GM12878 (cell line): ENCODE measurements at regions of chr7 and their contacts with region 1.

Region 1: DNA sequence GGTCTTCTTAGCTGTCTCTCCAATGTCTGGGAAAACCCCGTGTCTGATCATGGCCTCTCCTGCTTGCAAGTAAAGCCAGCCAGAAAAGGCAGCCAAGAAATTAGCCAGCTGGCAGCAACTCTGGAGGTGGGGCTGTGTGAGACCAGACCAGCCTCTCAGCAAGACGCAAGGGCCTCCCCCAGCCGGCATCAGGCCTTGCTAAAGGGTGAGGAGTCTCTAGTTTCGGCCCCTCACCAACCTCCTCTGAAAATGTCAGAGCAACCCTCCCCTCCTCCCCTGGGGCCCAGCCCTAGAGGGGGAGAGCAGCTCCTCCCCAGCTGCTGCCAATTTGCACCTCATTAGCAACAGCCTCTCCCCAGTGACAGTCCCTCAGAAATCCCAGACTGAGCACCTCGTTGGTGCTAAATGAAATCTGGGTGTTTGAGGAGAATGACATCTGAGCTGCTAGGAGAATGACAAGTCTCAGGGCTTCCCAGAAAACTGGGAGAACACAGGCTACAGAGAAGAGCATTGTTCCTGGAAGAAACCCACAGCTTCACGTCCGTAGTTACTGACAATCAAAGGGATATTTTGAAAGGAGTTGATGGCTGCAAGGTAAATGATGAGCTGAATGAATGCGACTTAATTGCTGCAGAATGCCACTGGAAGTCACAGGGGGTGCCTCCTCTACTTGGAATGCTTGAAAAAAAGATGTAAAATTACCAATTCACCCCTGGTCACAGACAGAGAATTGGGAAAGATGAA is 25.9 kb downstream of the DGKI start:
- DNase-seq: no peak
- ATAC-seq: peak; percentile 91
- H3K4me3 ChIP-seq: no peak overlapping the region
- H3K27ac ChIP-seq: no peak overlapping the region
- H3K4me1 ChIP-seq: peaks cover 6% of the 10 kb centered on the region
- H3K27me3 ChIP-seq: no peaks in the 10 kb centered on the region
- CTCF ChIP-seq: no peak
- EP300 ChIP-seq: no peak; a peak in 1 of 4 replicates
- POLR2A ChIP-seq: no peak
- RAD21 ChIP-seq: no peak

Region 2: DNA sequence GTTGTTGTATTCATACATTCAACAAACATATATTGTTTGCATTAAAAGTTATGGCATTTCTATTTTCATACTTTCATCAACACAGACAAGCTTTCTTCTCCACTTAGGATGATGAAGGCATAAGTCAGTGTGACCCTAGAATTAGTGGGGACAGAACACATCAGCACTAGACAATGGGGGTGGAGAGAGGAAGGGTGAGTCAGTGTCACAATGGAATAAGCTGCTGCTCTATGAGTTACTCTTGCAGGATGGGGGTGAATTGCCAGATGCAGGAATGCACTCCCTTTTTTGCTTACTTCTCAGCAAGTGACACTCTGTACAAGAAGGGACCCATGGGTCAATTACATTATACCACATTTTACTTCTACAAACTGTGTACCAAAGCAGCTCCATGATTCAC is 48.1 kb before region 1 on chr7:
- CTCF ChIA-PET with region 1: interaction called, 5 read pairs
- POLR2A ChIA-PET with region 1: interaction called, 7 read pairs
- RAD21 ChIA-PET with region 1: interaction called, 16 read pairs
- SMC1A ChIA-PET with region 1: interaction called, 9 read pairs
- in situ Hi-C with region 1: no loop called
- intact Hi-C with region 1: no loop called
- DNase-seq: no peak
- ATAC-seq: peak; percentile 64
- H3K4me3 ChIP-seq: no peak overlapping the region
- H3K27ac ChIP-seq: no peak overlapping the region
- H3K4me1 ChIP-seq: no peaks in the 10 kb centered on the region
- H3K27me3 ChIP-seq: no peaks in the 10 kb centered on the region
- CTCF ChIP-seq: no peak
- EP300 ChIP-seq: no peak
- POLR2A ChIP-seq: no peak
- RAD21 ChIP-seq: no peak

Region 3: DNA sequence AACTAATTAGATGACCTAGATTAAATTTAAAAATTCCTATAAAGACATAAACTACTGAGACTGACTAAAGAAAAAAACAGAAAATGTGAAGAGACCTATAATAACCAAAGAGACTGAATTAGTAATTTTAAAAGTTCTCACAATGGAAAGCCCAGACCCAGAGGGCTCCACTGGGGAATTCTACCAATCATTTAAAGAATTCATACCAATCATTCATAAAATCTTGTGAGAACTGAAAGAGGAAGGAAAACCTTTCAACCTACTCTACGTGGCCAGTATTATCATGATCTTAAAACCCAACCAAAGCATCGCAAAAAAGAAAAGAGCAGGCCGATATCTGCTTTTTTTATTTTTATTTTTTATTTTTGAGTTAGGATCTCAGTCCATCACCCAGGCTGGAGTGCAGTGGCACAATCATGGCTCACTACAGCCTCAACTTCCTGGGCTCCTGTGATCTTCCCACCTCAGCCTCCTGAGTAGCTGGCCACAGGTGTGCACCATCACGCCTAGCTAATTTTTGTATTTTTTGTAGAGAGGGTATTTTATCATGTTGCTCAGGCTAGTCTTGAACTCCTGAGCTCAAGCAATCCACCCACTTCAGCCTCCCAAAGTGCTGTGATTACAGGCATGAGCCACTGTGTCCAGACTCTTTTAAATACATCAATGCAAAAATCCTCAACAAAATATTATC is 22.6 kb before region 1 on chr7:
- CTCF ChIA-PET with region 1: interaction called, 9 read pairs
- POLR2A ChIA-PET with region 1: interaction called, 6 read pairs
- RAD21 ChIA-PET with region 1: interaction called, 11 read pairs
- SMC1A ChIA-PET with region 1: interaction called, 103 read pairs
- in situ Hi-C with region 1: no loop called
- intact Hi-C with region 1: no loop called
- DNase-seq: peak; percentile 59
- ATAC-seq: peak; percentile 96
- H3K4me3 ChIP-seq: no peak overlapping the region
- H3K27ac ChIP-seq: no peak overlapping the region; the same call in 1 of the 2 replicates
- H3K4me1 ChIP-seq: no peaks in the 10 kb centered on the region
- H3K27me3 ChIP-seq: no peaks in the 10 kb centered on the region
- CTCF ChIP-seq: no peak
- EP300 ChIP-seq: peak; percentile 48 to 84; a peak in 3 of 4 replicates
- POLR2A ChIP-seq: no peak
- RAD21 ChIP-seq: no peak

Region 4: DNA sequence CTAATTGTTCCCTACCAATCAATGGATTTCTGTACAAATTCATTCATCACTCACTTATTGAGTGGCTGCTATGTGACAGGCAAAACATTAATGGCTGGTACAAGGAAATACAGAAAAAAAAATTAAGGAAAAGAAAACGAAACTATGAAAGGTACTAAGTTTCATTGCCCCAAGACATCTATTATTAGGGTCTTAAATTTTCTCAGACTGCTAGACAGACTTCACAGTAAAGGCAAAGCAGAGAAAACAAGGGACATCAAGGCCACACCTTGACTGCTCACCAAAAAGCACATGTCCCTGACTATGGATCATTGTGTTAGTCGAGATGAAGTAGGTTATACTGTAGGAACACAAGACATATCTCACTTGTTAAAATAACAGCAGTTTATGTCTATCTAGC is 10.6 kb before region 1 on chr7:
- CTCF ChIA-PET with region 1: interaction called, 23 read pairs
- POLR2A ChIA-PET with region 1: interaction called, 19 read pairs
- RAD21 ChIA-PET with region 1: interaction called, 30 read pairs
- SMC1A ChIA-PET with region 1: interaction called, 103 read pairs
- in situ Hi-C with region 1: no loop called
- intact Hi-C with region 1: no loop called
- DNase-seq: no peak
- ATAC-seq: peak; percentile 31
- H3K4me3 ChIP-seq: no peak overlapping the region
- H3K27ac ChIP-seq: no peak overlapping the region
- H3K4me1 ChIP-seq: peaks cover 3% of the 10 kb centered on the region; the same call in 1 of the 2 replicates
- H3K27me3 ChIP-seq: no peaks in the 10 kb centered on the region
- CTCF ChIP-seq: no peak
- EP300 ChIP-seq: no peak
- POLR2A ChIP-seq: no peak
- RAD21 ChIP-seq: no peak

Region 5: GRCh38 chr7:137846827-137847567 is 26.1 kb after region 1 on chr7 and contains the start of gene DGKI:
- CTCF ChIA-PET with region 1: interaction called, 6 read pairs
- POLR2A ChIA-PET with region 1: interaction called, 11 read pairs
- RAD21 ChIA-PET with region 1: interaction called, 16 read pairs
- SMC1A ChIA-PET with region 1: interaction called, 281 read pairs
- in situ Hi-C with region 1: no loop called
- intact Hi-C with region 1: no loop called
- DNase-seq: no peak
- ATAC-seq: peak; percentile 67
- H3K4me3 ChIP-seq: peak within 1 kb of the TSS; percentile 17; the same call in 1 of the 2 replicates
- H3K27ac ChIP-seq: no peak within 1 kb of the TSS
- H3K4me1 ChIP-seq: no peaks in the 10 kb centered on the region
- H3K27me3 ChIP-seq: peaks cover 1 to 14% of the 10 kb centered on the region in 2 experiments; a peak in 2 of 4 replicates
- CTCF ChIP-seq: no peak
- EP300 ChIP-seq: no peak
- POLR2A ChIP-seq: peak; percentile 51
- RAD21 ChIP-seq: no peak
- polyA plus RNA-seq, gene DGKI: 28.3 to 37.1 TPM